ENCODE measurements at regions of chr2 and their contacts with region 1.

Region 1: GRCh38 chr2:10122386-10123280 is at the start of gene RRM2:
- DNase-seq: peak; percentile 65
- ATAC-seq: peak; percentile 81
- H3K4me3 ChIP-seq: peak within 1 kb of the TSS; percentile 71
- H3K27ac ChIP-seq: peak within 1 kb of the TSS; percentile 98
- H3K4me1 ChIP-seq: peaks cover 5% of the 10 kb centered on the region
- H3K27me3 ChIP-seq: no peaks in the 10 kb centered on the region
- CTCF ChIP-seq: no peak
- EP300 ChIP-seq: no peak
- POLR2A ChIP-seq: peak; percentile 99
- RAD21 ChIP-seq: no peak
- polyA plus RNA-seq, gene RRM2: 54.4 to 64.5 TPM

Region 2: DNA sequence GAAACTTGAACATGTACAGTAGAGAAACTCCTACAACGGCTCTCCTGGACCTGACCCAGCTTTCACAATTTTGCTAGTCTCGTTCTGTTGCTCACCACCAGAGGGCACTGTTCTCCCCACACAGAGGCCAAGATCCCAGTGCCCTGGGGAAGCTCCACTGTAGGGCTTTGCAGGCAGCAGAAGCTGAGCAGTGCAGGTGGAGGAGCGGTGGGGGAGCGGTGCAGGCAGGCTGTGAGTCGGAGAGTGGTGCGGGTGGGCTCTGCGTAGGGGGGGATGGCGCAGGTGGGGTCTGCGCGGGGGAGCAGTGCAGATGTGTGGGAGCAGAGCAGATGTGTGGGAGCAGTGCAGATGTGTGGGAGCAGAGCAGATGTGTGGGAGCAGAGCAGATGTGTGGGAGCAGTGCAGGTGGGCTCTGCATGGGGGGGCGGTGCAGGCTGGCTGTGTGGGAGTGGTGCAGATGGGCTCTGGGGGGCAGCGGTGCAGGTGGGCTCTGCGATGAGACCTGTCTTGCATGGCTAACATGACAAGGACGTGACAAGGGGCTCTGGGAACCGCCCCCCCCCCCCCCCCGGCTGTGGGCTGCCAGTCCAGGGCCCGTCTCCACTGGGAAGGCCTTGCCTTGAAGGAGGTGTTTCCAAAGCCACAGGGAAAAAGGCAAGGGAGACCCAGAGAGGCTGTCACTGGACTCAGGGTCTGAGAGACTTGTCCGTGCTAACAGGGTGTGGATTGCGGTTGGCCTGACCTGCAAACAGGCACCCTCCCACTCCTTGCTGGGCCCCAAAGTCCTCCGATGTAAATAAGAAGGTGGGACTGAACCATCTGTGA is 49.8 kb before region 1 on chr2:
- CTCF ChIA-PET with region 1: interaction called, 29 read pairs
- POLR2A ChIA-PET with region 1: interaction called, 13 read pairs
- RAD21 ChIA-PET with region 1: interaction called, 42 read pairs
- SMC1A ChIA-PET with region 1: interaction called, 31 read pairs
- in situ Hi-C with region 1: no loop called
- intact Hi-C with region 1: loop called (anchors 2 kb)
- DNase-seq: no peak
- ATAC-seq: peak; percentile 96
- H3K4me3 ChIP-seq: no peak overlapping the region
- H3K27ac ChIP-seq: no peak overlapping the region
- H3K4me1 ChIP-seq: peaks cover 21% of the 10 kb centered on the region
- H3K27me3 ChIP-seq: no peaks in the 10 kb centered on the region
- CTCF ChIP-seq: peak; percentile 84 to 94 (median 86); a peak in 5 of 6 replicates
- EP300 ChIP-seq: no peak
- POLR2A ChIP-seq: no peak
- RAD21 ChIP-seq: peak; percentile 92

Region 3: DNA sequence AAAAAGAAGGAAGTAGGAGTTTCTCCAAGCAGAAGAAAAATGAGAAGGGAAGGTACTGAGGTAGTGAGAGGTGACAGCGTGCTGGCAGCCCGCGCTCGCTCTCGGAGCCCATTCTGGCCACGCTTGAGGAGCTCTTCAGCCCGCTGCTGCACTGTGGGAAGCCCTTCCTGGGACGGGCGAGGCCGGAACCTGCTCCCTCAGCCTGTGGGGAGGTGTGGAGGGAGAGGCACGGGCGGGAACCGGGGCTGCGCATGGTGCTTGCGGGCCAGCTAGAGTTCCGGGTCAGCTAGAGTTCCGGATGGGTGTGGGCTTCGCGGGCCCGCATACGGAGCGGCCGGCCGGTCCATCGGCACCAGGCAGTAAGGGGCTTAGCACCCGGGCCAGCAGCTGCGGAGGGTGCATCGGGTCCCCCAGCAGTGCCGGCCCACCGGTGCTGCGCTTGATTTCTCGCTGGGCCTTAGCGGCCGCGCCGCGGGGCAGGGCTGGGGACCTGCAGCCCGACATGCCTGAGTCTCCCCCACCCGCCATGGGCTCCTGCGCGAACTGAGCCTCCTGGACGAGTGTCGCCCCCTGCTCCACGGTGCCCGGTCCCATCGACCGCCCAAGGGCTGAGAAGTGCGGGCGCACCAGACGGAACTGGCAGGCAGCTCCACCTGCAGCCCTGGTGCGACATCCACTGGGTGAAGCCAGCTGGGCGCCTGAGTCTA is 31.3 kb before region 1 on chr2:
- CTCF ChIA-PET with region 1: interaction called, 24 read pairs
- POLR2A ChIA-PET with region 1: interaction called, 13 read pairs
- RAD21 ChIA-PET with region 1: interaction called, 29 read pairs
- SMC1A ChIA-PET with region 1: interaction called, 25 read pairs
- in situ Hi-C with region 1: no loop called
- intact Hi-C with region 1: no loop called
- DNase-seq: no peak
- ATAC-seq: peak; percentile 71
- H3K4me3 ChIP-seq: no peak overlapping the region; the same call in 1 of the 2 replicates
- H3K27ac ChIP-seq: no peak overlapping the region
- H3K4me1 ChIP-seq: peaks cover 18% of the 10 kb centered on the region
- H3K27me3 ChIP-seq: no peaks in the 10 kb centered on the region
- CTCF ChIP-seq: peak in 1 of 3 experiments; percentile 29; a peak in 1 of 6 replicates
- EP300 ChIP-seq: no peak
- POLR2A ChIP-seq: no peak
- RAD21 ChIP-seq: no peak

Region 4: GRCh38 chr2:10141736-10142642 is 19.4 kb after region 1 on chr2:
- CTCF ChIA-PET with region 1: interaction called, 31 read pairs
- POLR2A ChIA-PET with region 1: interaction called, 4 read pairs
- RAD21 ChIA-PET with region 1: interaction called, 8 read pairs
- SMC1A ChIA-PET with region 1: interaction called, 3 read pairs
- in situ Hi-C with region 1: no loop called
- intact Hi-C with region 1: no loop called
- DNase-seq: no peak
- ATAC-seq: peak; percentile 88
- H3K4me3 ChIP-seq: no peak overlapping the region
- H3K27ac ChIP-seq: no peak overlapping the region
- H3K4me1 ChIP-seq: no peaks in the 10 kb centered on the region
- H3K27me3 ChIP-seq: no peaks in the 10 kb centered on the region
- CTCF ChIP-seq: peak; percentile 38 to 61 (median 49); a peak in 5 of 6 replicates
- EP300 ChIP-seq: no peak
- POLR2A ChIP-seq: no peak
- RAD21 ChIP-seq: peak; percentile 40

Region 5: GRCh38 chr2:10302479-10303180 is 180.0 kb after region 1 on chr2 and contains the start of gene HPCAL1:
- CTCF ChIA-PET with region 1: interaction called, 3 read pairs
- POLR2A ChIA-PET with region 1: interaction called, 4 read pairs
- RAD21 ChIA-PET with region 1: interaction called, 12 read pairs
- SMC1A ChIA-PET with region 1: interaction called, 9 read pairs
- in situ Hi-C with region 1: no loop called
- intact Hi-C with region 1: no loop called
- DNase-seq: peak; percentile 40
- ATAC-seq: peak; percentile 86
- H3K4me3 ChIP-seq: peak within 1 kb of the TSS; percentile 69
- H3K27ac ChIP-seq: peak within 1 kb of the TSS; percentile 61
- H3K4me1 ChIP-seq: peaks cover 16% of the 10 kb centered on the region
- H3K27me3 ChIP-seq: no peaks in the 10 kb centered on the region; a peak in 1 of 4 replicates
- CTCF ChIP-seq: peak; percentile 41 to 52 (median 45); a peak in 5 of 6 replicates
- EP300 ChIP-seq: no peak
- POLR2A ChIP-seq: no peak
- RAD21 ChIP-seq: peak; percentile 19; the same call in 1 of the 2 replicates
- polyA plus RNA-seq, gene HPCAL1: 0.40 to 1.3 TPM

Region 6: GRCh38 chr2:10659898-10660568 is 537.4 kb after region 1 on chr2:
- CTCF ChIA-PET with region 1: interaction called, 12 read pairs
- POLR2A ChIA-PET with region 1: no interaction called
- RAD21 ChIA-PET with region 1: no interaction called
- SMC1A ChIA-PET with region 1: no interaction called
- in situ Hi-C with region 1: no loop called
- intact Hi-C with region 1: loop called (anchors 5 kb)
- DNase-seq: no peak
- ATAC-seq: peak; percentile 69
- H3K4me3 ChIP-seq: no peak overlapping the region
- H3K27ac ChIP-seq: no peak overlapping the region
- H3K4me1 ChIP-seq: no peaks in the 10 kb centered on the region
- H3K27me3 ChIP-seq: no peaks in the 10 kb centered on the region
- CTCF ChIP-seq: peak; percentile 39 to 59 (median 48); a peak in 5 of 6 replicates
- EP300 ChIP-seq: no peak
- POLR2A ChIP-seq: no peak
- RAD21 ChIP-seq: peak; percentile 30; the same call in 1 of the 2 replicates